Ascending aorta (tissue), 2 donors: ENCODE measurements at regions of chr18 and their contacts with region 1.

Region 1: DNA sequence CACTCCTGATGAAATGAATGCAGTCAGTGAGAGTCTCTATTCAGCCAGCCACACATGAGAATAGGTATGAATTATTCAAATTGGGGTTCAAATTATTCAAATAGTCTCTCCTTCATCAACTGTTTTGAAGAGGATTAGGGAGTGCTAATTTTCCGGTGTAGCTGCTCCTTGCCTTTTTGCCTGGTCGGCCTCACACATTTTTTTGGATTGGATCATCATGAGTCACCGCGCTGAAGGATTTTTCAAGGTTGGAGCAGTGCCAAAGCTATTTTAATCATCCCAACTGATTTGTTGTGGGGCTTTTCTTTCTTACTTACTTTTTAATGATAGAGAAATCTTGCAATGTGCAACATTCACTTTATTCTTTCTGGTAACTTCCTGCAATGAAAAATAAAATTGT is 2.4 kb upstream of the DTNA start:
- DNase-seq: peak in 1 of 2 donors; percentile 86
- H3K4me3 ChIP-seq: peak overlapping the region; percentile 18 to 25
- H3K27ac ChIP-seq: peak overlapping the region; percentile 62 to 63
- H3K4me1 ChIP-seq: peaks cover 9 to 28% of the 10 kb centered on the region in 2 donors
- H3K27me3 ChIP-seq: no peaks in the 10 kb centered on the region
- CTCF ChIP-seq: no peak

Region 2: GRCh38 chr18:34592961-34593382 is 114.7 kb before region 1 on chr18:
- intact Hi-C with region 1: loop called (anchors 5 kb)
- DNase-seq: peak in 1 of 2 donors; percentile 78
- H3K4me3 ChIP-seq: peak overlapping the region; percentile 42 to 67
- H3K27ac ChIP-seq: peak overlapping the region; percentile 67 to 76
- H3K4me1 ChIP-seq: peaks cover 0 to 13% of the 10 kb centered on the region in 2 donors
- H3K27me3 ChIP-seq: no peaks in the 10 kb centered on the region
- CTCF ChIP-seq: no peak

Region 3: GRCh38 chr18:34723143-34723542 is 15.5 kb after region 1 on chr18:
- intact Hi-C with region 1: no loop called
- DNase-seq: no peak
- H3K4me3 ChIP-seq: no peak overlapping the region
- H3K27ac ChIP-seq: no peak overlapping the region
- H3K4me1 ChIP-seq: peaks cover 0 to 4% of the 10 kb centered on the region in 2 donors
- H3K27me3 ChIP-seq: no peaks in the 10 kb centered on the region
- CTCF ChIP-seq: no peak

Region 4: DNA sequence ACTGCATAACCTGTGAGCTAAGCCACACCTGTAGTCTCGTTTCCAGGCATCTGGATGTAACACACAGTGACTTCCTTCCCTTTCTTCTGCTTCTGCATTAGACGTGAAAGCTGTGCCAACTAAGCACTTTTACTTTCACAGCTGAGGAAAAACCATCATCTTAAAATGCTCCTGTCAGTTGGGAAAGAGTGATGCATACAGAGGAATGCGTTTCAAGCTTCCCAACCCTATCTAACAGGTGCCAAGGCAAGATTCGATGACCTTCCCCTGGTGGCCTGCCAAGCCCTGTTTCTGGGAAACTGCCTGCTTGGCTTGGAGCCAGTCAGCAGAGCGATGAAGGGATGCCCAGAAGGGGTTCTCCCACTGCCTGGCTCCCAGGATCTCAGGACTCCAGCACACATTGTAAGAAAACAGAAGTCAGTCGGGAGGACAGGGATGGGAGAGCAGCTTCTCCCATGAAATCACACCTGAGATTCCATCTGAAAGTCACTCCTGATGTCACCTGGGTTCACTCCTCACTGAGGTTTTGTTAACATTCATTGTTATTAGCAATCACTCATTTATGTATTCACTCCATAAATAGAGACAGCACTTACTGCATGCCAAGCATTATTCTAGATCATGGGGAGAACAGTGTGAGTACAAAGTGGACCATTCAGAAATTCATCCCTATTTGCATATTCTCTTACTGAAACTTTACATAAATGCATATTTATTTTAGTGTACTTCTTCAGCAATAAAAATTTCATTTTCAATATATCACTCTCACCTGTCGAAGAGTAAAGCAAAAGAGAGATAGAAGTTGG is 66.5 kb after region 1 on chr18:
- intact Hi-C with region 1: loop called (anchors 5 kb)
- DNase-seq: peak in 1 of 2 donors; percentile 74
- H3K4me3 ChIP-seq: peak overlapping the region in 1 of 2 donors; percentile 11
- H3K27ac ChIP-seq: peak overlapping the region; percentile 29 to 63
- H3K4me1 ChIP-seq: peaks cover 0 to 23% of the 10 kb centered on the region in 2 donors
- H3K27me3 ChIP-seq: no peaks in the 10 kb centered on the region
- CTCF ChIP-seq: no peak

Region 5: DNA sequence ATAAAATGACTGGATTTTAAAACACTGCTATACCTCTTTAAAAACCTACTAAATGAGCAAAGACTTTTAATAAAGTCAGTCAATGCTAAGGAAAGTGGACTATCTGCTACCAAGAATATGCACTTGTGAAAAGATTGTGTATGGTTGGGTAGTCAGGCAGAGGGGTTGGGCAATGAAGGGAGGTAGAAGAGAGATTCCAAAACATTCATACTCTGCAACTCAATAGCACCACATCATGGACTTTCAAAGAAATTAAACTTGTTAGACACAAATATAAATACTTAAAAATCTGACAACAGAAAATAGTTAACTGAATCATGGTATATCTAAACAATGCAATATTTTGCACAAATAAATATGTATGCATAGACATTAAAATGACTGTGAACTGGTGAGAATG is 193.6 kb after region 1 on chr18:
- intact Hi-C with region 1: loop called (anchors 10 kb)
- DNase-seq: no peak
- H3K4me3 ChIP-seq: no peak overlapping the region
- H3K27ac ChIP-seq: no peak overlapping the region
- H3K4me1 ChIP-seq: no peaks in the 10 kb centered on the region
- H3K27me3 ChIP-seq: no peaks in the 10 kb centered on the region
- CTCF ChIP-seq: peak; percentile 43 to 54 (median 53)

Region 6: GRCh38 chr18:34942276-34942675 is 234.6 kb after region 1 on chr18:
- intact Hi-C with region 1: no loop called
- DNase-seq: no peak
- H3K4me3 ChIP-seq: no peak overlapping the region
- H3K27ac ChIP-seq: no peak overlapping the region
- H3K4me1 ChIP-seq: peaks cover 0 to 2% of the 10 kb centered on the region in 2 donors
- H3K27me3 ChIP-seq: no peaks in the 10 kb centered on the region
- CTCF ChIP-seq: no peak